Activated CD4-positive, alpha-beta memory T cell treated with anti-CD3 and anti-CD28 coated beads for 36 hours (primary cell): ENCODE measurements at regions of chr1 and their contacts with region 1.

Region 1: DNA sequence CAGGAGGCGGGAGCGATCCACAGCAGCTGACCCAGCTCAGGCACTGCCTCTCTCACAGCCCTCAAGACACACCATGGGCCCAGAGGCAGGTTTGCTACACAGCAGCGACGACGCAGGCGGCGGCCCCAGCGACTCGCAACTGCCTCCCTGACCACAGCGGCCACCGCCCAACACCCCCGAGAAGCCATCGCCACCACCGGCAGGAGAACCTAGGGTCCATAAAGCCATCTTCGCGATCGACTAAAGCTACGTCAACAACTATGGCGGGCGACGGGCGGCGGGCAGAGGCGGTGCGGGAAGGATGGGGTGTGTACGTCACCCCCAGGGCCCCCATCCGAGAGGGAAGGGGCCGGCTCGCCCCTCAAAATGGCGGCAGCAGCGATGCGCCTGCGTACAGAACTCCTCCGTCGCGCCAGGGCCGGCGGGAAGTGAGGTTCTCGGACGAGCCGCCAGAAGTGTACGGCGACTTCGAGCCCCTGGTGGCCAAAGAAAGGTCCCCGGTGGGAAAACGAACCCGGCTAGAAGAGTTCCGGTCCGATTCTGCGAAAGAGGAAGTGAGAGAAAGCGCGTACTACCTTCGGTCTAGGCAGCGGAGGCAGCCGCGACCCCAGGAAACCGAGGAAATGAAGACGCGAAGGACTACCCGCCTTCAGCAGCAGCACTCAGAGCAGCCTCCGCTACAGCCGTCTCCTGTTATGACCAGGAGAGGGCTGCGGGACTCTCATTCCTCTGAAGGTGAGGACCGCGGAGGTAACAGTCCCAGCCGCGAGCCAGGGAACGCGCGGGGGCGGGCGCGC is at the start of gene TOR1AIP1:
- DNase-seq: peak; percentile 99
- H3K4me3 Mint-ChIP-seq: peak within 1 kb of the TSS; percentile 86
- H3K27ac Mint-ChIP-seq: peak within 1 kb of the TSS; percentile 96
- H3K4me1 Mint-ChIP-seq: peaks cover 50% of the 10 kb centered on the region
- H3K27me3 Mint-ChIP-seq: no peaks in the 10 kb centered on the region
- total RNA-seq, gene TOR1AIP1: 57.4 to 57.7 TPM

Region 2: DNA sequence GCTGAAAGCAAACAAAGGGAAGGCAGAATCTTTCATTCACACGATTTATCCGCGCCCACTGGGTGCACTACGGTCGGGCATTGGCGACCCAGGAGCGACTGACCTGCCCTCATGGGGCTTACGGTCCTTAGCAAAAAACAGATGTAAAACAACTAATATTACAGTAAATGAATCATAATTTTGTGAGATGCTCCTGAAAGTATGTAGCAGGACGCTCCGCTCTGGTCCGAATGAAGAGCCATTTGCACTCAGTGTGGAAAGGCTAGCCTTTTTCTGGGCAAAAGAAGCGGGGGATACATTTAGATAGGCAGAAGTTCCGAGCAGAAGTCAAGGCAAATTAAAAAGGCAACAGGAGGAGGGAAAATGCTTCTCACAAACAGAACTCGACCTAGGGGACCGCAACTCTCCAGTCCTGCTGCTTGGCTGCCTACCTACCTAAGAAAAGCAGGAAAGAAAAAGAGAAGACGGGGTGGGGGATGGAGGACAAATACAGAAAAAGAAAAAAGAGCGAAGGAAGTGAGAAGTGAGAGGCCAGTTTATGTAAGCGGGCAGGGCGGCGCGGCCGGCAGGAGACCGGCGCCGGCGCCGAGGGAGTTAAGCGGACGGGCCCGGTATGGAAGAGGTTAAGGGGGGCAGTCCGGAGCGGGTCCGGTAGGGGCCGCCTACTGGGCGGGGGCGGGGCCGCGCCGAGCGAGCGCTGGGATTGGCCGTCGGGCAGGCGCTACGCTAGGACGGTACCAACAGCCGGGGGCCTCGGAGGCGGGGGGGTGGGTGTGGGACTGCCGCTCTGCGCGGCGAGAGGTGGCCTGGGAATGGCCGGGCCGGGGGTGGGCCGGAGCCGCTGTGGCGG is 857.1 kb before region 1 on chr1 and contains the start of gene FAM20B:
- CTCF ChIA-PET with region 1: no interaction called
- POLR2A ChIA-PET with region 1: no interaction called
- intact Hi-C with region 1: loop called (anchors 5 kb)
- DNase-seq: peak; percentile 94
- H3K4me3 Mint-ChIP-seq: peak within 1 kb of the TSS; percentile 87
- H3K27ac Mint-ChIP-seq: peak within 1 kb of the TSS; percentile 85
- H3K4me1 Mint-ChIP-seq: peaks cover 37% of the 10 kb centered on the region
- H3K27me3 Mint-ChIP-seq: no peaks in the 10 kb centered on the region
- total RNA-seq, gene FAM20B: 38.1 to 39.2 TPM

Region 3: GRCh38 chr1:179293340-179294327 is 588.8 kb before region 1 on chr1 and contains the start of gene SOAT1:
- CTCF ChIA-PET with region 1: no interaction called
- POLR2A ChIA-PET with region 1: no interaction called
- intact Hi-C with region 1: loop called (anchors 5 kb)
- DNase-seq: peak; percentile 95
- H3K4me3 Mint-ChIP-seq: peak within 1 kb of the TSS; percentile 97
- H3K27ac Mint-ChIP-seq: peak within 1 kb of the TSS; percentile 91
- H3K4me1 Mint-ChIP-seq: peaks cover 41% of the 10 kb centered on the region
- H3K27me3 Mint-ChIP-seq: no peaks in the 10 kb centered on the region
- total RNA-seq, gene SOAT1: 37.8 to 42.9 TPM

Region 4: GRCh38 chr1:179714159-179714558 is 168.3 kb before region 1 on chr1:
- CTCF ChIA-PET with region 1: no interaction called
- POLR2A ChIA-PET with region 1: no interaction called
- intact Hi-C with region 1: no loop called
- DNase-seq: no peak
- H3K4me3 Mint-ChIP-seq: no peak overlapping the region
- H3K27ac Mint-ChIP-seq: no peak overlapping the region
- H3K4me1 Mint-ChIP-seq: peaks cover 14% of the 10 kb centered on the region
- H3K27me3 Mint-ChIP-seq: peaks cover 7% of the 10 kb centered on the region

Region 5: GRCh38 chr1:179954493-179955297 is 72.3 kb after region 1 on chr1 and contains the start of gene CEP350:
- CTCF ChIA-PET with region 1: interaction called, 4 read pairs
- POLR2A ChIA-PET with region 1: interaction called, 12 read pairs
- intact Hi-C with region 1: loop called (anchors 1 kb)
- DNase-seq: peak; percentile 99
- H3K4me3 Mint-ChIP-seq: peak within 1 kb of the TSS; percentile 80
- H3K27ac Mint-ChIP-seq: peak within 1 kb of the TSS; percentile 95
- H3K4me1 Mint-ChIP-seq: peaks cover 42% of the 10 kb centered on the region
- H3K27me3 Mint-ChIP-seq: no peaks in the 10 kb centered on the region
- total RNA-seq, gene CEP350: 31.7 to 34.2 TPM

Region 6: GRCh38 chr1:180571832-180572636 is 689.6 kb after region 1 on chr1:
- CTCF ChIA-PET with region 1: no interaction called
- POLR2A ChIA-PET with region 1: no interaction called
- intact Hi-C with region 1: loop called (anchors 2 kb)
- DNase-seq: peak; percentile 77
- H3K4me3 Mint-ChIP-seq: peak overlapping the region; percentile 17
- H3K27ac Mint-ChIP-seq: peak overlapping the region; percentile 48
- H3K4me1 Mint-ChIP-seq: peaks cover 22% of the 10 kb centered on the region
- H3K27me3 Mint-ChIP-seq: peaks cover 20% of the 10 kb centered on the region

Region 7: GRCh38 chr1:181088079-181089016 is 1205.9 kb after region 1 on chr1 and contains the start of gene IER5:
- CTCF ChIA-PET with region 1: no interaction called
- POLR2A ChIA-PET with region 1: no interaction called
- intact Hi-C with region 1: loop called (anchors 5 kb)
- DNase-seq: peak; percentile 98
- H3K4me3 Mint-ChIP-seq: peak within 1 kb of the TSS; percentile 97
- H3K27ac Mint-ChIP-seq: peak within 1 kb of the TSS; percentile 96
- H3K4me1 Mint-ChIP-seq: peaks cover 39% of the 10 kb centered on the region
- H3K27me3 Mint-ChIP-seq: peaks cover 2% of the 10 kb centered on the region
- total RNA-seq, gene IER5: 27.9 to 28.9 TPM